ENCODE measurements at regions of chr3 and their contacts with region 1.

Region 1: GRCh38 chr3:5016218-5017161 is 37.3 kb downstream of the BHLHE40 start:
- DNase-seq: peak; percentile 71
- ATAC-seq: peak; percentile 62
- H3K4me3 Mint-ChIP-seq: peak overlapping the region; percentile 35
- H3K27ac Mint-ChIP-seq: peak overlapping the region; percentile 86
- H3K4me1 Mint-ChIP-seq: peaks cover 96% of the 10 kb centered on the region
- H3K27me3 Mint-ChIP-seq: no peaks in the 10 kb centered on the region

Region 2: GRCh38 chr3:5002174-5002870 is 14.2 kb before region 1 on chr3:
- CTCF ChIA-PET with region 1: interaction called, 14 read pairs
- POLR2A ChIA-PET with region 1: interaction called, 19 read pairs
- DNase-seq: peak; percentile 66
- ATAC-seq: peak; percentile 50
- H3K4me3 Mint-ChIP-seq: peak overlapping the region; percentile 47
- H3K27ac Mint-ChIP-seq: peak overlapping the region; percentile 84
- H3K4me1 Mint-ChIP-seq: peaks cover 85% of the 10 kb centered on the region
- H3K27me3 Mint-ChIP-seq: no peaks in the 10 kb centered on the region

Region 3: GRCh38 chr3:5026331-5027218 is 10.1 kb after region 1 on chr3:
- CTCF ChIA-PET with region 1: interaction called, 15 read pairs
- POLR2A ChIA-PET with region 1: interaction called, 9 read pairs
- DNase-seq: peak; percentile 68
- ATAC-seq: peak; percentile 77
- H3K4me3 Mint-ChIP-seq: peak overlapping the region; percentile 76
- H3K27ac Mint-ChIP-seq: peak overlapping the region; percentile 86
- H3K4me1 Mint-ChIP-seq: peaks cover 56% of the 10 kb centered on the region
- H3K27me3 Mint-ChIP-seq: no peaks in the 10 kb centered on the region

Region 4: DNA sequence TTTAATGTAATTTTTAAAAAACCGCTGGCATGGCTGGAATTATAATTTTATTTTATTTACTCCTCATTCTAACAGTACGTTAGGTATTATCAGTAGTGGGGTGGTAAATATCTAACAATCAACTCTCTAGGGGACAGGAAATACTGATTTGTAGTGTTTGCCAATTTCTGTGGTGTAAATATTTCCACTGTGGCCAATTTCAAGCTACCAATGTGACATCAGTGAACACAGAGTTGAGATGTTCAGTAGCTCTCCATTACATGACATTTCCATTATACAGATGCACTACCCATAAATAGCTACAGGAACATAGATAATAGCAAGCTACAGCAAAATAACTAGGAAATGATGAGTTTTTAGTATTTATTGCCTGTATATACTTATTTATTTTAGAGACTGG is 95.6 kb after region 1 on chr3:
- CTCF ChIA-PET with region 1: no interaction called
- POLR2A ChIA-PET with region 1: no interaction called
- DNase-seq: no peak
- ATAC-seq: peak; percentile 51
- H3K4me3 Mint-ChIP-seq: no peak overlapping the region
- H3K27ac Mint-ChIP-seq: no peak overlapping the region
- H3K4me1 Mint-ChIP-seq: no peaks in the 10 kb centered on the region
- H3K27me3 Mint-ChIP-seq: no peaks in the 10 kb centered on the region

Region 5: GRCh38 chr3:5126586-5126985 is 110.1 kb after region 1 on chr3:
- CTCF ChIA-PET with region 1: no interaction called
- POLR2A ChIA-PET with region 1: no interaction called
- DNase-seq: no peak
- ATAC-seq: no peak
- H3K4me3 Mint-ChIP-seq: no peak overlapping the region
- H3K27ac Mint-ChIP-seq: no peak overlapping the region
- H3K4me1 Mint-ChIP-seq: peaks cover 35% of the 10 kb centered on the region
- H3K27me3 Mint-ChIP-seq: no peaks in the 10 kb centered on the region